ENCODE measurements at regions of chr19 and their contacts with region 1.

Region 1: GRCh38 chr19:50476224-50476942 is at the starts of genes EMC10 and GARIN5A:
- DNase-seq: peak; percentile 93 to 96
- ATAC-seq: peak; percentile 95
- H3K4me3 ChIP-seq: peak within 1 kb of the TSS; percentile 62 to 78
- H3K27ac ChIP-seq: no peak within 1 kb of the TSS
- H3K4me1 ChIP-seq: no peaks in the 10 kb centered on the region
- H3K27me3 ChIP-seq: no peaks in the 10 kb centered on the region
- total RNA-seq, gene EMC10: 79.6 to 86.5 TPM
- total RNA-seq, gene GARIN5A: not detected

Region 2: DNA sequence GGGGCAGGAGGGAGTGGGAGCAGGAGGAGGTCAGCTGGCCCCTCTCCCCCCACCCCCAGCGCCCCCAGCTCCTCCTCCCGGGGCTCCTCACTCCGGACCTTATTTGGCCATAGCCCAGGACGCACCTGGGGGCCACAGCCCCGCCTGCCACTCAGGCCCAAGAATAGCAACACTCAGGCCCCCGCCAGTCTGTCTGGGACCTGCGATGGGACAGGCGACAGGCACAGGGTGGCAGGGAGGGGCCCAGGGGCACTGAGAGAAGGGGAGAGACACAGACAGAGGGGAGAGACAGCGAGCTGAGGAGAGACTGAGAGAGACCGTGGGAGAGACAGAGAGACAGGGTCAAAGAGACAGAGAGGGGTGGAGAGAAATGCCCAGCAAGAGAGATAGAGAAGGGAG is 24.4 kb after region 1 on chr19:
- intact Hi-C with region 1: no loop called
- DNase-seq: peak; percentile 30 to 50
- ATAC-seq: no peak
- H3K4me3 ChIP-seq: no peak overlapping the region
- H3K27ac ChIP-seq: no peak overlapping the region
- H3K4me1 ChIP-seq: no peaks in the 10 kb centered on the region
- H3K27me3 ChIP-seq: no peaks in the 10 kb centered on the region

Region 3: DNA sequence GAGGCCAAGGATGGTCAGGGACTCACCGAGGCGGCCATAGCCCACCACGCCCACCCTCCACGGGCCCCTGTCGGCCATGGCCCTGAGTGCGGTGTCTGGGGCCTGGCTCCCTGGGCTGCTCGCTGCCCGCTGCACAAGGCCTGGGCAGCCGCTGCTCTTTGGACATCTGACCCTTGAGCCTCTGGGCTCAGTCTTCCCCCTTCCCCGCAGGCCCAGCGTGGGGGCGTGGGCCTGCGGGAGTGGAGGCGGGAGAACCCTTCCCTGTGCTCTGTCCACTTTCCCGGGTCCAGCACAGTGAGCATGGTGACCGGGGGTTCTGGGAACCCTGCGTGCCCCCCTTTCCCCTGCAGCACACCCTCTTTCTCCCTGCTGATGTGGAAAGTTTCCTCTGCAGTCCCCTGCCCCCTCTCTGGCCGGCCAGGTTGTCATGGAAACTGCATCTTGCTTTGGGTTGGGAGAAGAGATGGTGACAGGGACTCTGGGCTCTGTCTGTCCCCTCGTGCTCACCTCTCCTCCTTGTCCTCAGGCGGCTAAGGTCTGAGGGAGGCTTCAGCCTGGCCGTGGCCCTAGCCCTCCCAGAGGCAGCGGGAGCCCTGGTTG is 37.5 kb after region 1 on chr19 and contains the start of gene ASPDH:
- intact Hi-C with region 1: loop called in 1 of 2 experiments (anchors 2 kb)
- DNase-seq: no peak
- ATAC-seq: no peak
- H3K4me3 ChIP-seq: no peak within 1 kb of the TSS
- H3K27ac ChIP-seq: no peak within 1 kb of the TSS
- H3K4me1 ChIP-seq: no peaks in the 10 kb centered on the region
- H3K27me3 ChIP-seq: no peaks in the 10 kb centered on the region
- total RNA-seq, gene ASPDH: not detected

Measured in aorta (tissue), 5 donors.